ENCODE measurements at regions of chr15 and their contacts with region 1.

Region 1: GRCh38 chr15:78195735-78196201 is 38.6 kb downstream of the ACSBG1 start:
- DNase-seq: peak; percentile 52
- ATAC-seq: peak; percentile 95
- H3K4me3 Mint-ChIP-seq: no peak overlapping the region
- H3K27ac Mint-ChIP-seq: no peak overlapping the region
- H3K4me1 Mint-ChIP-seq: no peaks in the 10 kb centered on the region
- H3K27me3 Mint-ChIP-seq: no peaks in the 10 kb centered on the region
- CTCF ChIP-seq: peak; percentile 60

Region 2: DNA sequence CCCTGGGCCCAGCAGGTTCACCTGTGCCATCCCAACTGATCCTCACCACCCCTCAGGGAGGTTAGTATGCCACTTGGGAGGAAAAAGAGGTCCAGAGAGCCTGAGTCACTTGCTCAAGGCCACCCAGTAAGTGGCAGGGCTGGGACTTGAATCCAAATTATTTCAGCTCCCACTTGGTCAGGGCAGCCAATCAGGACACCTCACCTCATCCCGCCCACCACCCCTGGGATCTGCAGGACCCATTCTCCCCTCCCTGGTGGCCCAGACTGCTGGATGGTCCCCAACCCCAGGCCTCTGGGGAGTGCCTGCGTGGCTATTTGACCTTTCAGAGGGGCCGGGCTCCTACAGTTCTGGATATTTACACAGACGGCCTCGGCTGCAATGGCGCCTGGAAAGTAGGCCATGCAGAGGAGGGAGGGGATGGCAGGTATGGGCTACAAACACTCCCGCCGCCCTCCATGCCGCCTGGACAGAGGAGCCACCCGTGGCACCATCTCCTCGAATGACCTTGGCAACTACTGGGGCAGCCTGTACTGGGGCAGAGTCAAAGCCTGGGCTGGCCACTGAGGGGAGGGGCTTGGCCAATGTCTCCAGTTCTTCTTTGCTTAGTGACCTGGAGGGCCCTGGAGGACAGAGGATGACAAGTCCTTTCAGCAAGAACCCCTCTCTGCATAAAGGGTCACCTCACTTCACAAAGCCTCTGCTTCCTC is 409.4 kb before region 1 on chr15:
- CTCF ChIA-PET with region 1: no interaction called
- POLR2A ChIA-PET with region 1: no interaction called
- DNase-seq: no peak
- ATAC-seq: no peak
- H3K4me3 Mint-ChIP-seq: no peak overlapping the region
- H3K27ac Mint-ChIP-seq: no peak overlapping the region
- H3K4me1 Mint-ChIP-seq: peaks cover 20% of the 10 kb centered on the region
- H3K27me3 Mint-ChIP-seq: no peaks in the 10 kb centered on the region
- CTCF ChIP-seq: no peak

Region 3: GRCh38 chr15:78000091-78000926 is 195.5 kb before region 1 on chr15:
- CTCF ChIA-PET with region 1: interaction called, 13 read pairs
- POLR2A ChIA-PET with region 1: no interaction called
- DNase-seq: peak; percentile 97
- ATAC-seq: peak; percentile 99
- H3K4me3 Mint-ChIP-seq: no peak overlapping the region
- H3K27ac Mint-ChIP-seq: no peak overlapping the region; the same call in 1 of the 2 replicates
- H3K4me1 Mint-ChIP-seq: peaks cover 16% of the 10 kb centered on the region
- H3K27me3 Mint-ChIP-seq: no peaks in the 10 kb centered on the region
- CTCF ChIP-seq: peak; percentile 57

Region 4: GRCh38 chr15:78170848-78171773 is 24.7 kb before region 1 on chr15:
- CTCF ChIA-PET with region 1: interaction called, 13 read pairs
- POLR2A ChIA-PET with region 1: no interaction called
- DNase-seq: no peak
- ATAC-seq: no peak
- H3K4me3 Mint-ChIP-seq: no peak overlapping the region
- H3K27ac Mint-ChIP-seq: no peak overlapping the region
- H3K4me1 Mint-ChIP-seq: no peaks in the 10 kb centered on the region
- H3K27me3 Mint-ChIP-seq: no peaks in the 10 kb centered on the region
- CTCF ChIP-seq: no peak

Region 5: DNA sequence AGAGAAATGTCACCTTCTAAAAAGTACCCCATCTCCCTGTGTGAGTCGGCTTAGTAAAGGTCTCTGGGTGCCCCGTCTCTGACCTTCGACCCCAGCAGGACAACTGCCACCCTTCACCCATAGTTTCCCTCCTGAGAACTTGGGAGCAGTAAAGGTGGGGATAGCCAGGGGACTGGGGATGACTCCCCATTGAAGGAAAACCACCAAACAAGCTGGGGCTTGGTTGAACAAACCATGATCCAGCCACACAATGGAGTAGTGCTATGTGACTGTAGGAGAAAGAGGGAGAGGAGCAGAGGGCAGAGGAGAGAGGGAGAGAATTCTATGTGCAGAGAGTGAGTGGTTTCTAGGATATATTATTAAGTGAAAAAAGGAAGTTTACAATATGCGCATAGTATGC is 12.9 kb before region 1 on chr15:
- CTCF ChIA-PET with region 1: interaction called, 10 read pairs
- POLR2A ChIA-PET with region 1: no interaction called
- DNase-seq: no peak
- ATAC-seq: no peak
- H3K4me3 Mint-ChIP-seq: no peak overlapping the region
- H3K27ac Mint-ChIP-seq: peak overlapping the region; percentile 81
- H3K4me1 Mint-ChIP-seq: peaks cover 7% of the 10 kb centered on the region
- H3K27me3 Mint-ChIP-seq: no peaks in the 10 kb centered on the region
- CTCF ChIP-seq: no peak

Region 6: GRCh38 chr15:78241007-78241406 is 45.2 kb after region 1 on chr15:
- CTCF ChIA-PET with region 1: interaction called, 36 read pairs
- POLR2A ChIA-PET with region 1: no interaction called
- DNase-seq: peak; percentile 95
- ATAC-seq: peak; percentile 76
- H3K4me3 Mint-ChIP-seq: no peak overlapping the region
- H3K27ac Mint-ChIP-seq: no peak overlapping the region
- H3K4me1 Mint-ChIP-seq: peaks cover 32% of the 10 kb centered on the region
- H3K27me3 Mint-ChIP-seq: no peaks in the 10 kb centered on the region; the same call in 1 of the 2 replicates
- CTCF ChIP-seq: peak; percentile 83

Region 7: DNA sequence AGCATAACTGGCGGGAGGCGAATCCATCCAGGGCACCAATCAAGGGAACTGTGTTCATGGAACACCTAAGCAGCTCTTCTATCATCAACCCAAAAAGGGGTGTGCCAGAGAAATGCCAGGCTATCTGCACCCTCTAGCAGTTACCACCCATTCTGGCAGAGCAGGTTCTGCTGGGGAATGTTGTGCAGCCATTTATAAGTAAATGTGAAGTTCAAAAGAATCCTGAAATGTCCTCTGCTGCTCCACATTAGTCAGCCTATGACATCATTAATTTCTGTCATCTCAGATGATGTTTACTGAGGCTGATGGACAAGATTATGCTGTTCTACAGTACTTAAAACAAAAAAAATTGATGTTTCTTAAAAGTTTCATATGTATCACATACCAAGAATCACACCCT is 95.9 kb after region 1 on chr15:
- CTCF ChIA-PET with region 1: no interaction called
- POLR2A ChIA-PET with region 1: no interaction called
- DNase-seq: no peak
- ATAC-seq: no peak
- H3K4me3 Mint-ChIP-seq: no peak overlapping the region
- H3K27ac Mint-ChIP-seq: no peak overlapping the region
- H3K4me1 Mint-ChIP-seq: no peaks in the 10 kb centered on the region
- H3K27me3 Mint-ChIP-seq: no peaks in the 10 kb centered on the region
- CTCF ChIP-seq: no peak

Region 8: DNA sequence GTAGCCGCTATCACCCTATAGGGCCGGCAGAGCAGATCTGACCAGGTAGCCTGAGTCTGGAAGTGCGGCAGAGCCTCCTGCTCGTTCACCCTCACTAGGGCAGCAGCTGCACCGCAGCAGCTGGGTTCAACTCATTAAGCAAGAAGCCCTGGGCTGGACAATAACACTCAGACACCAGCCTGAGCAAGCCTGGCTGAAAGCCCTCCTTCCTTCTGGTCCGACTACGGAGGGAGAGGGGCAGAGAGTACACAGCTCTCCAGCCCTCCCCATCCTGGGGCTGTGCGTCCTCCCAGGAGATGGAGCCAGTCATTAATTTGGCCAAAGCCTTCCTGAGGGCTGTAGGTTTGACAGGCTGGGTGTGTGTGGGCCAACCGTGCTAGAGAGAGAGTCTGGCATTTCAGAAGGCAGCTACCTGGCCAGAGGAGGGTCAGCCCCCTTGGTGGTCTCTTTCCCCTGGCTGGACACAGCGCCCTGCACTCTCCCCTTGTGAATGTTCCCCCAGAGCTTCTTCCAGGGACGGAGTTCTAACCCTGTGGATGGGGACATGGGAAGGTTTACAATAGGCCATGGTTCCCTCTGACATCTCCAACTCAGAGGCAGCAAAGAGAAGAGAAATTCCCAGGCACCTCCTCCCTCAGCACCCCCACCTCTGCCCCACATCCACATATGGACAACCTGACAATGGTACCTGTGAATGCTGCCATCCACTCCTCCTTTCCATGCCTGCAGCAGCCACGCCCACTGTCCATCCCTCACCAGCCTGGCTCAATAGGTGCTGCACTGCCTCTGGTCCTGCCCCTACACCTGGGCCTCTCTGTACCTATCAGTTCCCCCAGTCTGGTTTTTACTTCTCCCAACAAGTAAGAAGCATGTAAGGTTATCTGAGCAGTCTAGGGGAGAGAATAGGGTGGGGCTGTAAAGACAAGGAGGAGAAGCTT is 438.7 kb after region 1 on chr15:
- CTCF ChIA-PET with region 1: no interaction called
- POLR2A ChIA-PET with region 1: no interaction called
- DNase-seq: no peak
- ATAC-seq: no peak
- H3K4me3 Mint-ChIP-seq: no peak overlapping the region
- H3K27ac Mint-ChIP-seq: no peak overlapping the region
- H3K4me1 Mint-ChIP-seq: peaks cover 10% of the 10 kb centered on the region
- H3K27me3 Mint-ChIP-seq: peaks cover under 1% of the 10 kb centered on the region
- CTCF ChIP-seq: no peak